B cell (primary cell): ENCODE measurements at regions of chr5 and their contacts with region 1.

Region 1: GRCh38 chr5:157265714-157266285 is at the start of gene CYFIP2:
- DNase-seq: peak; percentile 89
- ATAC-seq: peak; percentile 89
- H3K4me3 ChIP-seq: peak within 1 kb of the TSS; percentile 62 to 85 (median 73)
- H3K4me3 Mint-ChIP-seq: peak within 1 kb of the TSS; percentile 99
- H3K27ac ChIP-seq: peak within 1 kb of the TSS; percentile 99
- H3K27ac Mint-ChIP-seq: peak within 1 kb of the TSS; percentile 99
- H3K4me1 ChIP-seq: peaks cover 65 to 69% of the 10 kb centered on the region in 2 donors
- H3K4me1 Mint-ChIP-seq: peaks cover 70% of the 10 kb centered on the region
- H3K27me3 ChIP-seq: no peaks in the 10 kb centered on the region
- H3K27me3 Mint-ChIP-seq: no peaks in the 10 kb centered on the region
- CTCF ChIP-seq: no peak
- total RNA-seq, gene CYFIP2: 663 and 681 TPM in 2 replicates

Region 2: DNA sequence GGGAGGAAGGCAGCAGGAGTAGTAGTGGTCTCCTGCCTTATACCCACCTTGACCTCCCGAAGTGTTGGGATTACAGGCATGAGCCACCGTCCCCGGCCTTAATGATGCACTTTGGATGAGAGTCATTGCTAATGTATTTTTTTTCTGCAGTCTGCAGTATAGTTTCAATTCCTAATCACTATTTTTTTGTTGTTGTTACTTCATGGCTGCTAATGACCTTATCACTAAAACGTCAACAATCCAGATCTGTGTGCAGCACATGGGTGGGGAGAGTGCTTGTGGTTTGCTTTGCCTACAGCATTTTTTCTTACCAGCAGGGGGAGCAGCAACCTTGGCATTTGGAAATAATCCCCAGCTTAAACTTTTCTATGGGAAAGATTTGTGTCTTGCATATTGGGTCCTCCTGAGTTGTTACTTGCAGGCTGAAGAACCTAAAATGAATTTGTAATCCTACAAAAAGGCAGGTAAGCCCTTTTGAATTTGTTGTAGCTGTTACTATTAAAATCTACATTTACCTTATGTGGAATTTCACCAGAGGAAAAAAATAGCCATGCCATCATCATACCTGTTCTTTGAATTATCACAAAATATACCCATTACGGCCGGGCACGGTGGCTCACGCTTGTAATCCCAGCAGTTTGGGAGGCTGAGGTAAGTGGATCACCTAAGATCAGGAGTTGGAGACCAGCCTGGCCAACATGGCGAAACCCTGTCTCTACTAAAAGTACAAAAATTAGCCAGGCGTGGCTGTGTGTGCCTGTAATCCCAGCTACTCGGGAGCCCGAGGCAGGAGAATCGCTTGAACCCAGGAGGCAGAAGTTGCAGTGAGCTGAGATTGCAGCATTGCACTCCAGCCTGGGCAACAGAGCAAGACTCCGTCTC is 116.8 kb before region 1 on chr5:
- CTCF ChIA-PET with region 1: interaction called, 14 read pairs
- POLR2A ChIA-PET with region 1: no interaction called
- intact Hi-C with region 1: no loop called
- DNase-seq: peak; percentile 80
- ATAC-seq: peak; percentile 81
- H3K4me3 ChIP-seq: no peak overlapping the region
- H3K4me3 Mint-ChIP-seq: no peak overlapping the region
- H3K27ac ChIP-seq: no peak overlapping the region
- H3K27ac Mint-ChIP-seq: no peak overlapping the region
- H3K4me1 ChIP-seq: peaks cover 2 to 5% of the 10 kb centered on the region in 2 donors
- H3K4me1 Mint-ChIP-seq: peaks cover 5% of the 10 kb centered on the region
- H3K27me3 ChIP-seq: no peaks in the 10 kb centered on the region
- H3K27me3 Mint-ChIP-seq: no peaks in the 10 kb centered on the region
- CTCF ChIP-seq: peak; percentile 97

Region 3: GRCh38 chr5:157283434-157283833 is 17.6 kb after region 1 on chr5:
- CTCF ChIA-PET with region 1: interaction called, 13 read pairs
- POLR2A ChIA-PET with region 1: interaction called, 7 read pairs
- intact Hi-C with region 1: loop called (anchors 1 kb)
- DNase-seq: peak; percentile 91
- ATAC-seq: peak; percentile 100
- H3K4me3 ChIP-seq: peak overlapping the region in 1 of 5 experiments; percentile 16
- H3K4me3 Mint-ChIP-seq: peak overlapping the region; percentile 50
- H3K27ac ChIP-seq: peak overlapping the region; percentile 63 to 75
- H3K27ac Mint-ChIP-seq: peak overlapping the region; percentile 84
- H3K4me1 ChIP-seq: peaks cover 47 to 56% of the 10 kb centered on the region in 2 donors
- H3K4me1 Mint-ChIP-seq: peaks cover 70% of the 10 kb centered on the region
- H3K27me3 ChIP-seq: no peaks in the 10 kb centered on the region
- H3K27me3 Mint-ChIP-seq: no peaks in the 10 kb centered on the region
- CTCF ChIP-seq: no peak

Region 4: DNA sequence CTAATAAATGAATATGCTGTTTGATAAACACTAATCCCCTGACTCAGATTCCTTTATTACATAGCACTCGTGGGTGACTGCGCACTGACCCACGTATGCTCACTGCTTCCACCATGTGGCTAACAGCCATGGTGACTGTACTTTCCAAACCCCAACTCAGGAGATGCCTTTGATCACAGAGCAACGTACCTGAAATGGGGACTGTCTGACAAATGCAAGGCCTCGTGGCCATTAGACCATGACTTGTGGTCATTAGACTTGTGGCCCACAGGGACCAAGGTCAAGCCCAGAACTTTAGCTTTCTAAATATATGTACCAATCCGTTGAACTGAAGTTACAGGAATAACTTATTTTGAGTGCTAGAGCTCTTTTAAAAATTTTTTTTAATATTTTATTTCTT is 46.7 kb after region 1 on chr5:
- CTCF ChIA-PET with region 1: interaction called, 495 read pairs
- POLR2A ChIA-PET with region 1: interaction called, 9 read pairs
- intact Hi-C with region 1: loop called (anchors 2 kb)
- DNase-seq: peak; percentile 79
- ATAC-seq: peak; percentile 84
- H3K4me3 ChIP-seq: no peak overlapping the region
- H3K4me3 Mint-ChIP-seq: no peak overlapping the region
- H3K27ac ChIP-seq: peak overlapping the region; percentile 13 to 53
- H3K27ac Mint-ChIP-seq: peak overlapping the region; percentile 70
- H3K4me1 ChIP-seq: peaks cover 5 to 26% of the 10 kb centered on the region in 2 donors
- H3K4me1 Mint-ChIP-seq: peaks cover 30% of the 10 kb centered on the region
- H3K27me3 ChIP-seq: no peaks in the 10 kb centered on the region
- H3K27me3 Mint-ChIP-seq: no peaks in the 10 kb centered on the region
- CTCF ChIP-seq: peak; percentile 84

Region 5: GRCh38 chr5:157558041-157558595 is 292.3 kb after region 1 on chr5:
- CTCF ChIA-PET with region 1: no interaction called
- POLR2A ChIA-PET with region 1: interaction called, 11 read pairs
- intact Hi-C with region 1: no loop called
- DNase-seq: no peak
- ATAC-seq: no peak
- H3K4me3 ChIP-seq: no peak overlapping the region
- H3K4me3 Mint-ChIP-seq: peak overlapping the region; percentile 23
- H3K27ac ChIP-seq: peak overlapping the region; percentile 30 to 69
- H3K27ac Mint-ChIP-seq: peak overlapping the region; percentile 85
- H3K4me1 ChIP-seq: peaks cover 84 to 87% of the 10 kb centered on the region in 2 donors
- H3K4me1 Mint-ChIP-seq: peaks cover 90% of the 10 kb centered on the region
- H3K27me3 ChIP-seq: no peaks in the 10 kb centered on the region
- H3K27me3 Mint-ChIP-seq: no peaks in the 10 kb centered on the region
- CTCF ChIP-seq: no peak